ENCODE measurements at regions of chr20 and their contacts with region 1.

Region 1: GRCh38 chr20:16476032-16476431 is 97.2 kb downstream of the KIF16B start:
- DNase-seq: peak; percentile 68
- ATAC-seq: peak; percentile 70
- H3K4me3 ChIP-seq: no peak overlapping the region
- H3K4me3 Mint-ChIP-seq: no peak overlapping the region
- H3K27ac ChIP-seq: no peak overlapping the region
- H3K27ac Mint-ChIP-seq: no peak overlapping the region
- H3K4me1 ChIP-seq: no peaks in the 10 kb centered on the region
- H3K4me1 Mint-ChIP-seq: peaks cover 7% of the 10 kb centered on the region
- H3K27me3 ChIP-seq: no peaks in the 10 kb centered on the region
- H3K27me3 Mint-ChIP-seq: no peaks in the 10 kb centered on the region
- CTCF ChIP-seq: peak; percentile 89

Region 2: DNA sequence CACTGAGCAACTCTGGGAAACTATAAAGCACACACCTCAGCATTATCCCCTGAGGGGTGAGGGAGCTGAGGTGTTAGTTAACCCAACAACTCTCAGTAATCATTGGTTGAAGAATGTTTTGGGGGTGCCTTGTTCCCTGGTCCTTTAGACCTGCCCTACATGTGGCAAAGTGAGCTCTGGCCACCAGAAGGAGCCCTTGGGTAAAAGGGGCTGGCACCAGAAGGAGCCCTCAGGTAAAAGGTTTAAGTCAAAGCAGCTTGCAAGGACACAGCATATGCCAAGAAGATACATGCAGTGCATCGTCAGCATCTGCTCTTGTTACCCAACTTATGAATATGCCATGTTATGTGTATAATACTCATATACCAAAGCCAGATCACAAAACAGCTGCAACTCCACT is 984.5 kb before region 1 on chr20:
- CTCF ChIA-PET with region 1: interaction called, 4 read pairs
- POLR2A ChIA-PET with region 1: no interaction called
- intact Hi-C with region 1: loop called (anchors 5 kb)
- DNase-seq: peak; percentile 13
- ATAC-seq: no peak
- H3K4me3 ChIP-seq: no peak overlapping the region
- H3K4me3 Mint-ChIP-seq: no peak overlapping the region
- H3K27ac ChIP-seq: no peak overlapping the region
- H3K27ac Mint-ChIP-seq: no peak overlapping the region
- H3K4me1 ChIP-seq: no peaks in the 10 kb centered on the region
- H3K4me1 Mint-ChIP-seq: no peaks in the 10 kb centered on the region
- H3K27me3 ChIP-seq: no peaks in the 10 kb centered on the region
- H3K27me3 Mint-ChIP-seq: no peaks in the 10 kb centered on the region
- CTCF ChIP-seq: peak; percentile 13

Region 3: DNA sequence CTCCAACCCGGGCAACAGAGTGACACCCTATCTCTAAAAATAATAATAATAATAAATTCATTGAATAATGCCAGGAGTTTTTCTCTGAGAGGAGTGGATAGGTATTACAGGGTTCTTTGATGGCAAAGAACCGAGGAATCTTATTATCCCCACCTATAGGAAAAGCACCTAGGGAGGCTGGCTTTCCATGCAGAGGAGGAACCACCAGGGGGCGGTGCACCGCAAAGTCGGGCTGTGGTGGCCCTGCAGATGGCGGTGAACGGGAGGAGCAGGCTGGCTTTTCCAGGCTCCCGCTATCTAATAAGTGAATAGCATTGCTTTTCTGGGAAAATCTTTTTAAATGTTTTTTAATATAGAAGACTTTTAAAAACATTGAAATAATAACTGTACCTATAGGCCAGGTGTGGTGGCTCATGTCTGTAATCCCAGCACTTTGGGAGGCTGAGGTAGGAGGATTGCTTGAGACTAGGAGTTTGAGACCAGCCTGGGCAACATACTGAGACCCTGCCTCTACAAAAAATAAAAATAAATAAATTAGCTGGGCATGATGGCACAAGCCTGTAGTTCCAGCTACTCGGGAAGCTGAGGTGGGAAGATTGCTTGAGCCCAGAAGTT is 766.9 kb before region 1 on chr20:
- CTCF ChIA-PET with region 1: interaction called, 59 read pairs
- POLR2A ChIA-PET with region 1: no interaction called
- intact Hi-C with region 1: no loop called
- DNase-seq: peak; percentile 67
- ATAC-seq: peak; percentile 47
- H3K4me3 ChIP-seq: no peak overlapping the region
- H3K4me3 Mint-ChIP-seq: no peak overlapping the region
- H3K27ac ChIP-seq: no peak overlapping the region
- H3K27ac Mint-ChIP-seq: no peak overlapping the region
- H3K4me1 ChIP-seq: no peaks in the 10 kb centered on the region
- H3K4me1 Mint-ChIP-seq: peaks cover 4% of the 10 kb centered on the region
- H3K27me3 ChIP-seq: no peaks in the 10 kb centered on the region
- H3K27me3 Mint-ChIP-seq: no peaks in the 10 kb centered on the region
- CTCF ChIP-seq: peak; percentile 81

Region 4: DNA sequence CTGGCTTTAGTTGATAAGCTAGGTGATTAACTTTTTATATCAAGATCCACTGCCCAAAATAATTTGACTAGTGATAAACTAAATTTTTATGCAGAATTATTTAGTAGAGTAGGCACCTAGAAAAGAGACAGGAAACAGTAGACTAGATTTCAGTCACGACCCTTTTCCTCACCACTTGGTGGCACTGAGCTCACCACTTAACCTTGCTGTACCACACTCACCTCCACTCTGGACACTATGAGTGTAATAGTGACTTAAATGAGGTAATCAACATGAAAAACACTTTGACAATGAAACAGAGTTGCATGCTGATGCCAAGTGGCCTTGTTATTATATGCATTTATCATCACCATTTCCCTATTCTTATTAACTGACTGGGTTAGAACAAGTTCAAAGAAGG is 633.2 kb before region 1 on chr20:
- CTCF ChIA-PET with region 1: interaction called, 17 read pairs
- POLR2A ChIA-PET with region 1: no interaction called
- intact Hi-C with region 1: loop called (anchors 2 kb)
- DNase-seq: peak; percentile 52
- ATAC-seq: peak; percentile 66
- H3K4me3 ChIP-seq: no peak overlapping the region
- H3K4me3 Mint-ChIP-seq: no peak overlapping the region
- H3K27ac ChIP-seq: no peak overlapping the region
- H3K27ac Mint-ChIP-seq: peak overlapping the region; percentile 28
- H3K4me1 ChIP-seq: peaks cover 6 to 7% of the 10 kb centered on the region in 2 donors
- H3K4me1 Mint-ChIP-seq: peaks cover 14% of the 10 kb centered on the region
- H3K27me3 ChIP-seq: no peaks in the 10 kb centered on the region
- H3K27me3 Mint-ChIP-seq: peaks cover 4% of the 10 kb centered on the region
- CTCF ChIP-seq: peak; percentile 50

Region 5: DNA sequence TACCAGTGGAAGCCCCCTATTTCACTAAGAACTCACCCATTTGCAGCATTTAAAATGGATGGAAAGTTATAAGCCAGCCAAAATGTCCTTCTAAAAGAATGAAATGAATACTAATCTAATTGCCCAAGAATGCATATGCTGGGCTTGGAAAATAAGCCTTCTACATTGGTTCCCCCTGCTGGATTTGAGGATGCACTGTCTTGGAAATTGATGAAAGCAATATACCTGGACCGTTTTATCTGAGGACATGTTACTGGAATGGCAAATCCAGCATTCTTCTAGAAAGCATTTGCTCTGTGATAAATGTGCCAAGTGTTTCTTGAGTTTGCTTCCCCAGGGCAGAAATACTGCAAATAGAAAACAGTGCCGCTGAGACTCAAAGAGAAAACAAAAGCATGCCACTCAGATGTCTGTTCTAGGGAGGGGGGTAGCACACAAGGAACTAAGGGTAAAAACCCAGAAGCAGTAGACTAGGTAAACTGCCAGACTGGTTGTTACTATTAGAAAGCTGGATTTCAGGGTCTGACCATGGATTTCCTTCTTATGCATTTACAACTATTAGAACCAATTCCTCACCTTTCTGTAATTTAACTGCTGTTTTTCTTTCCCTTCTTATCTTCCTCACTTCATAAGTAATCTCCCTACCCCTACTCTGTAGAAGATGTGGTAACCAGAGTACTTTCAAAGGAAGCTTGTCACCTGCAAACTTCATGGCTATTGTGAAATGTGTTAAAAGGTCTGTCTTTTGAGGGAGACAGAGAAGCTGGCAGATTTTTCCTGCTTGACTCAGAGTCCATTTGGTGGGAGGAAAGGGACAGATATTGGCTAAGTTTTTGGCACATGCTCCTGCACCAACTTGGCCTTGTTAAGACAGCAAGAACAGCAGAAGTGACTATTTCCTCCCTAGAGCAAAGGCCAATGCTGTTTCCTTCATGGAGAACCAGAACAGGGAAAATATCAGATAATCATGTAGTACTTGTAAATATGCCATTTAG is 545.4 kb before region 1 on chr20:
- CTCF ChIA-PET with region 1: interaction called, 3 read pairs
- POLR2A ChIA-PET with region 1: no interaction called
- intact Hi-C with region 1: loop called (anchors 1 kb)
- DNase-seq: peak; percentile 44
- ATAC-seq: peak; percentile 61
- H3K4me3 ChIP-seq: no peak overlapping the region
- H3K4me3 Mint-ChIP-seq: no peak overlapping the region
- H3K27ac ChIP-seq: no peak overlapping the region
- H3K27ac Mint-ChIP-seq: peak overlapping the region; percentile 39
- H3K4me1 ChIP-seq: peaks cover 12 to 15% of the 10 kb centered on the region in 2 donors
- H3K4me1 Mint-ChIP-seq: peaks cover 26% of the 10 kb centered on the region
- H3K27me3 ChIP-seq: no peaks in the 10 kb centered on the region
- H3K27me3 Mint-ChIP-seq: no peaks in the 10 kb centered on the region
- CTCF ChIP-seq: peak; percentile 64

Region 6: DNA sequence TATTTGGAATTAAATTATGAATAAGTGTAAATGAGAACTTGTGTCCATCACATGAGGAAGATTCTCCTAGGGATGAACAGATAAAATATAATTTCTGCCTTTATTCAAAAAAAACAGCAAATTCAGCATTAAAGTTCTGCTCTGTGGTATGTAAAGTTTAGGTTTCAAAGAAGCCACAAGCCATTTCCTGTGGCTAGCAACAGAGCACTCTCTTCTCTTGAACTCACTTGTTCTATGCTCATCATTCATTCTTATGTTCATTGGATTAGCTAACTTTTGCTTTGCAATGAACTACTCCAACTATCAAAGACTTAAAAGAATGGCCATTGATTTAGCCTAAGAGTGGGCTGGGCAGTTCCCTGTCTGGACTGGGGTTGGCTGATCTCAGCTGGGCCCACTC is 233.0 kb after region 1 on chr20:
- CTCF ChIA-PET with region 1: no interaction called
- POLR2A ChIA-PET with region 1: no interaction called
- intact Hi-C with region 1: no loop called
- DNase-seq: no peak
- ATAC-seq: no peak
- H3K4me3 ChIP-seq: no peak overlapping the region
- H3K4me3 Mint-ChIP-seq: no peak overlapping the region
- H3K27ac ChIP-seq: no peak overlapping the region
- H3K27ac Mint-ChIP-seq: no peak overlapping the region
- H3K4me1 ChIP-seq: peaks cover 5 to 14% of the 10 kb centered on the region in 2 donors
- H3K4me1 Mint-ChIP-seq: peaks cover 18% of the 10 kb centered on the region
- H3K27me3 ChIP-seq: peaks cover 0 to 6% (median 2%) of the 10 kb centered on the region in 4 experiments
- H3K27me3 Mint-ChIP-seq: peaks cover 38% of the 10 kb centered on the region
- CTCF ChIP-seq: no peak

Measured in B cell (primary cell).